H1 (cell line): ENCODE measurements at regions of chr12 and their contacts with region 1.

Region 1: DNA sequence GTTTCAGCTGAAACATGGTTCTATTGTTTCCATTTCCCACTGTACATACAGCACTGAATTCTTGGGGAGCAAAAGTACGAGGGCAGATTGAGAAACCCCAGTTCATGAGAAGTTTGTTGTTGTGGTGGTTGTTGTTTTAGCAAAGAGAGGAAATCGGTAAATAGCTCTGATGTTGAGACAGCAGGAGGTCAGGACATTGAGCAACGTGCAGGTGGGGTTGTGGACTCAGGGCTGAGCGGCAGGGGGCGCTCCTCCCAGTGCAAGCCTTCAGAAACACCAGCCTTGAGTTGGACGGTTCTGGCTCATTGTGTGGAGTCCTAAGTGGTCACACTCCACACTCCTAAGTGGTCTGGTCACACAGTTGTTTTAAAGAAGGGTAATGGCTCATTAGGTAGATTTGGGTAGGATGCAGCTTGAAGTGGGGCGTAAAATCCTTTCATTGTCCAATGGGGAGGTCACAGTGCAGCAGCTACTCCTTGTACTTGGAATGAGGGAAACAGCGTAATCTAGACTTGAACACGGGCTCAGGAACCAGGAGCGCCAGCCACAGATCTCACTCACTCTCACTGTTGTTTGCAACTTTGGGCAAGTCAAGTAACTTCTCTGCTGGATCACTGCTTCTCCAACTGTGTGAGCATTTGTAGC is 14.5 kb upstream of the PWP1 start:
- DNase-seq: peak; percentile 43 to 82
- H3K4me3 ChIP-seq: peak overlapping the region in 1 of 4 experiments; percentile 9; a peak in 1 of 8 replicates
- H3K27ac ChIP-seq: no peak overlapping the region
- H3K4me1 ChIP-seq: peaks cover 3 to 9% (median 4%) of the 10 kb centered on the region in 4 experiments; a peak in 4 of 7 replicates
- H3K27me3 ChIP-seq: no peaks in the 10 kb centered on the region; a peak in 1 of 7 replicates
- CTCF ChIP-seq: peak; percentile 70 to 96 (median 95)
- EP300 ChIP-seq: no peak
- POLR2A ChIP-seq: no peak
- RAD21 ChIP-seq: peak; percentile 39 to 48; a peak in 3 of 4 replicates

Region 2: GRCh38 chr12:107458163-107458562 is 213.0 kb before region 1 on chr12:
- CTCF ChIA-PET with region 1: no interaction called
- POLR2A ChIA-PET with region 1: no interaction called
- DNase-seq: no peak
- H3K4me3 ChIP-seq: no peak overlapping the region
- H3K27ac ChIP-seq: no peak overlapping the region
- H3K4me1 ChIP-seq: peaks cover 0 to 2% (median 0%) of the 10 kb centered on the region in 4 experiments; a peak in 1 of 7 replicates
- H3K27me3 ChIP-seq: no peaks in the 10 kb centered on the region
- CTCF ChIP-seq: no peak
- EP300 ChIP-seq: no peak
- POLR2A ChIP-seq: no peak
- RAD21 ChIP-seq: no peak

Region 3: GRCh38 chr12:107655281-107656065 is 15.6 kb before region 1 on chr12:
- CTCF ChIA-PET with region 1: interaction called, 27 read pairs
- POLR2A ChIA-PET with region 1: interaction called, 6 read pairs
- DNase-seq: no peak
- H3K4me3 ChIP-seq: no peak overlapping the region
- H3K27ac ChIP-seq: no peak overlapping the region
- H3K4me1 ChIP-seq: peaks cover 0 to 13% (median 5%) of the 10 kb centered on the region in 4 experiments; a peak in 5 of 7 replicates
- H3K27me3 ChIP-seq: no peaks in the 10 kb centered on the region
- CTCF ChIP-seq: no peak
- EP300 ChIP-seq: no peak
- POLR2A ChIP-seq: no peak
- RAD21 ChIP-seq: no peak

Region 4: GRCh38 chr12:107685360-107686248 is 14.5 kb after region 1 on chr12 and contains the start of gene PWP1:
- CTCF ChIA-PET with region 1: interaction called, 47 read pairs
- POLR2A ChIA-PET with region 1: interaction called, 27 read pairs
- DNase-seq: peak; percentile 87 to 96
- H3K4me3 ChIP-seq: peak within 1 kb of the TSS; percentile 63 to 98 (median 80)
- H3K27ac ChIP-seq: peak within 1 kb of the TSS; percentile 95
- H3K4me1 ChIP-seq: peaks cover 0 to 3% (median under 1%) of the 10 kb centered on the region in 4 experiments; a peak in 2 of 7 replicates
- H3K27me3 ChIP-seq: no peaks in the 10 kb centered on the region
- CTCF ChIP-seq: no peak
- EP300 ChIP-seq: no peak
- POLR2A ChIP-seq: peak; percentile 72 to 93
- RAD21 ChIP-seq: no peak
- total RNA-seq, gene PWP1: 57.8 and 60.2 TPM in 2 replicates